PC-3 (cell line): ENCODE measurements at regions of chr19 and their contacts with region 1.

Region 1: DNA sequence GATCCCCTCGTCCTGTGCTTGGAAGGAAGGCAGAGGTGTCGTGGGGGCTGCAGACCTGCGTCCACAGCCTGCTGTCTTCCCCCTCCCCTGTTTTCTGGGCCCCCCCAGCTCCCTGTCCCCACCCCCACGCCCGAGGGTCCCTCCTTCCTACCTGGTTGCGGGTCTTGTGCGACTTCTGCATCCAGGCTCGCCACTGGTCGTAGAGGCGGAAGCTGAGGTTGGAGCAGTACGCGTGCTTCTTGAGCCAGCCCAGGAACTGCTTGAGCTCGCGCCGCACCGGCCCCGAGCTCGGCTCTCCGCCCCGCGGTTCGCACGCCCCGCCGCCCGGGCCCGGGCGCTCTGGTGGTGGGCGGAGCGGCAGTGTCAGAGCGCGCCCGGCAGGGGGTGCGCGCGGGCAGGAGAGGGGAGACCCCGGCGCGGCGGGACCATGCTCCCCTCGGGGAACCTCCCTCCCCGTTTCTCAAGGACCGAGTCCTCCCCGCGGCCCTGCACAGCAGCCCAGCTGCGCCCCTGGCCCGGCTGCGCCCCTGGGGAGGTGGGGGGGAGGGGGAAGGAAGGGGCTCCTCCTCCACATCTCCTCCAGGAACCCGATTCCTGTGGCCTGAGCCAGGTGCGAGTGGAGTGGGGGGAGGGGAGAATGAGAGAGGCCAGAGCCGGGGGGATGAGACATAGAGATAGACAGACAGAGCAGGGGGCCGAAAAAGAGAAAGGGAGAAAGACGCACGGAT is 5.7 kb downstream of the REX1BD start:
- DNase-seq: peak; percentile 87
- ATAC-seq: peak; percentile 76
- H3K4me3 ChIP-seq: peak overlapping the region; percentile 66
- H3K27ac ChIP-seq: no peak overlapping the region
- H3K4me1 ChIP-seq: peaks cover 18% of the 10 kb centered on the region
- H3K27me3 ChIP-seq: no peaks in the 10 kb centered on the region
- CTCF ChIP-seq: peak; percentile 85

Region 2: DNA sequence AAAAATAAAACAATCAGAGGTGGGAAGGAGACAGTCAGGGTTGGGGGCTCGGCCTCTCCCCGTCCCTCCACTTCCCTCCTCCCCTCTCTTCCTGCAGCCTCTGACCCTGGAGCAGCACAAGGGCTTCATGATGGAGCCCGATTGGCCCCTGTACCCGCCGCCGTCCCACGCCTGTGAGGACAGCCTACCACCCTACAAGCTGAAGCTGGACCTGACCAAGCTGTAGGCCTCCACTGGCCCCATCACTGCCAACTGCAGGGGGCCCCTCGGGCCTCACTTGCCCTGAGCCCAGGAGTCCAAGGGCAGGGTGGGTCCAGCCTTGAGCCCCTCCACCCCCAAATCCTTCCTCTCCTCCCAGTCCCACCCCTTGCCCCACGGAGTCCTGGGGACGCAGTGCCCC is 26.1 kb after region 1 on chr19:
- CTCF ChIA-PET with region 1: interaction called, 13 read pairs
- POLR2A ChIA-PET with region 1: no interaction called
- intact Hi-C with region 1: no loop called
- DNase-seq: no peak
- ATAC-seq: no peak
- H3K4me3 ChIP-seq: no peak overlapping the region
- H3K27ac ChIP-seq: no peak overlapping the region
- H3K4me1 ChIP-seq: no peaks in the 10 kb centered on the region
- H3K27me3 ChIP-seq: no peaks in the 10 kb centered on the region
- CTCF ChIP-seq: no peak

Region 3: GRCh38 chr19:18710996-18711751 is 116.9 kb after region 1 on chr19:
- CTCF ChIA-PET with region 1: no interaction called
- POLR2A ChIA-PET with region 1: no interaction called
- intact Hi-C with region 1: no loop called
- DNase-seq: no peak
- ATAC-seq: no peak
- H3K4me3 ChIP-seq: no peak overlapping the region
- H3K27ac ChIP-seq: no peak overlapping the region
- H3K4me1 ChIP-seq: no peaks in the 10 kb centered on the region
- H3K27me3 ChIP-seq: no peaks in the 10 kb centered on the region
- CTCF ChIP-seq: no peak